Transverse colon (tissue), 4 donors: ENCODE measurements at regions of chr2 and their contacts with region 1.

Region 1: GRCh38 chr2:147968571-147968970 is 52.0 kb downstream of the ORC4 start:
- DNase-seq: no peak
- H3K4me3 ChIP-seq: no peak overlapping the region
- H3K27ac ChIP-seq: no peak overlapping the region
- H3K4me1 ChIP-seq: no peaks in the 10 kb centered on the region
- H3K27me3 ChIP-seq: no peaks in the 10 kb centered on the region
- CTCF ChIP-seq: no peak
- EP300 ChIP-seq: no peak
- POLR2A ChIP-seq: no peak

Region 2: GRCh38 chr2:148971547-148971946 is 1003.0 kb after region 1 on chr2:
- in situ Hi-C with region 1: loop called in 2 of 4 experiments (anchors 25 kb)
- intact Hi-C with region 1: no loop called
- DNase-seq: no peak
- H3K4me3 ChIP-seq: no peak overlapping the region
- H3K27ac ChIP-seq: no peak overlapping the region
- H3K4me1 ChIP-seq: no peaks in the 10 kb centered on the region
- H3K27me3 ChIP-seq: no peaks in the 10 kb centered on the region
- CTCF ChIP-seq: no peak
- EP300 ChIP-seq: no peak
- POLR2A ChIP-seq: no peak